ENCODE measurements at regions of chr18 and their contacts with region 1.

Region 1: DNA sequence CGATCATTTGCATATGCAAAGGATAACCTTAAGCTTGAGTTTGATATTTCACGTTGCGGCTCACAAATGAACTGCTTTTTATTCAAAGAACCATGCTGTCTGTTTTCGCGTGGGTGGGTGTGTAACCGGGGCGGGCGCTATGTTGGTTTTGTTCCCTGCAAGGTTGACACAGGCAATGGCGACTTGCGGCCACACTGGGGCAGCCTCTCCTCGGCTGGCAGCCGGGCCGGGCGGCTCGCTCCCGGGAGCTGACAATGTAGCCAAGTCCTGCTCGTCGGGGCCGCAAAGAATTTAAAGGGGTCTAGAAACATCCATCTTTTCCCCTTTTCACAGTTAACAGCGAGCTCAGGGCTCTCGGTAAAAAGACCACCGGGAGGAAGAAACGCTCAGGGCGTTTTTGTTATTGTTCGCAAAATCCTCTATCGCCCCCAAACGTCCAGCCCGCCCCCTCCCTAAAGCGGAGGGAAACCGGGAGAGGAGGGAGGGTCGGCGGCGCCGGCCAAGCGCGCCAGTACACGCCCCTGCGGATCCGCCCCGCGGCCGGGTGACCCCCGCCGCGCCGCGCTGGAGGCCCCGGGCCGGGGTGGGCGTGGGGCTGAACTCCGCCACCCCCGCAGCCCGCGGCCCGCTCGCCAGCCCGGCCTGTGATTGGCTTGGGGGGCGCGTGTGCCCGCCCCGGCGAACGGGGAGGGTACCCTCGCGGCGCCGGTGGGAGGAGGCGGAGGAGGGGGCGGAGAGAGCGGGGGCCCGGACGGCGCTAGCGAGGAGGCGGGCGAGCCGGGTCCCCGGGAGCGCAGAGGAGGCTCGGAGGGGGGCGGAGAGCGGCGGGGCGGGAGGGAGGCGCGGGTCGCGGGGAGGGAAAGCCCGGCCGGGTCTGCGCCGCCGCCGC is at the start of gene NEDD4L:
- DNase-seq: peak; percentile 93
- ATAC-seq: peak; percentile 88
- H3K4me3 ChIP-seq: peak within 1 kb of the TSS; percentile 78
- H3K27ac ChIP-seq: peak within 1 kb of the TSS; percentile 80
- H3K4me1 ChIP-seq: peaks cover 13% of the 10 kb centered on the region
- H3K27me3 ChIP-seq: no peaks in the 10 kb centered on the region
- CTCF ChIP-seq: peak; percentile 88
- total RNA-seq, gene NEDD4L: 192 TPM

Region 2: GRCh38 chr18:57881818-57882413 is 161.8 kb before region 1 on chr18:
- intact Hi-C with region 1: loop called (anchors 10 kb)
- DNase-seq: peak; percentile 72
- ATAC-seq: peak; percentile 98
- H3K4me3 ChIP-seq: no peak overlapping the region
- H3K27ac ChIP-seq: no peak overlapping the region
- H3K4me1 ChIP-seq: no peaks in the 10 kb centered on the region
- H3K27me3 ChIP-seq: no peaks in the 10 kb centered on the region
- CTCF ChIP-seq: peak; percentile 90

Region 3: GRCh38 chr18:58091099-58091611 is 47.4 kb after region 1 on chr18:
- intact Hi-C with region 1: no loop called
- DNase-seq: no peak
- ATAC-seq: peak; percentile 72
- H3K4me3 ChIP-seq: no peak overlapping the region
- H3K27ac ChIP-seq: no peak overlapping the region
- H3K4me1 ChIP-seq: peaks cover 24% of the 10 kb centered on the region
- H3K27me3 ChIP-seq: no peaks in the 10 kb centered on the region
- CTCF ChIP-seq: no peak

Region 4: GRCh38 chr18:58128381-58129374 is 84.9 kb after region 1 on chr18:
- intact Hi-C with region 1: loop called (anchors 10 kb)
- DNase-seq: no peak
- ATAC-seq: peak; percentile 29
- H3K4me3 ChIP-seq: no peak overlapping the region
- H3K27ac ChIP-seq: no peak overlapping the region
- H3K4me1 ChIP-seq: no peaks in the 10 kb centered on the region
- H3K27me3 ChIP-seq: no peaks in the 10 kb centered on the region
- CTCF ChIP-seq: no peak

Region 5: DNA sequence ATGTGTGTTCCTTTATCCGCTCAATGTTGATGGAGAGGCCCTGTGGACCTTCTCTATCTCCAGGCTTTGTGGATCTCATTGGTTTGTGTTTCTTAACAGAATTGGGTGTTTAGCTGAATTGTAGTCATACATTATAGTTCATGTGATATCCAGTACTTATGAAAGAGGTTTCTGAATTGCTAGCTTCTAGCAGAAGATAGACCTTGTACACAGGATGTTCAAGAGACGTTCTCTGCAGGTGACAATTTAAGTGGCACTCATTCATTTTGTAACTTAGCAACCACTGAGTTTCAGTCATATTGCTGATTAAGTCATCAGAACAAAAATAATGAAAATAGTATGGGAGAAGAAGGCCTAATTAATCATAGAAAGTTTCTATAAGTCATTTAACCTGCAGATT is 305.9 kb after region 1 on chr18:
- intact Hi-C with region 1: no loop called
- DNase-seq: no peak
- ATAC-seq: no peak
- H3K4me3 ChIP-seq: no peak overlapping the region
- H3K27ac ChIP-seq: no peak overlapping the region
- H3K4me1 ChIP-seq: peaks cover 5% of the 10 kb centered on the region
- H3K27me3 ChIP-seq: no peaks in the 10 kb centered on the region
- CTCF ChIP-seq: no peak